Vagina (tissue), 2 donors: ENCODE measurements at regions of chr10 and their contacts with region 1.

Region 1: GRCh38 chr10:101602761-101603398 is 14.8 kb downstream of the DPCD start:
- DNase-seq: no peak
- H3K4me3 ChIP-seq: no peak overlapping the region
- H3K27ac ChIP-seq: no peak overlapping the region
- H3K4me1 ChIP-seq: no peaks in the 10 kb centered on the region
- H3K27me3 ChIP-seq: no peaks in the 10 kb centered on the region
- CTCF ChIP-seq: peak; percentile 1 to 61 (median 56)
- POLR2A ChIP-seq: no peak

Region 2: GRCh38 chr10:101512738-101513137 is 90.1 kb before region 1 on chr10:
- intact Hi-C with region 1: no loop called
- DNase-seq: no peak
- H3K4me3 ChIP-seq: no peak overlapping the region
- H3K27ac ChIP-seq: no peak overlapping the region
- H3K4me1 ChIP-seq: no peaks in the 10 kb centered on the region
- H3K27me3 ChIP-seq: no peaks in the 10 kb centered on the region
- CTCF ChIP-seq: no peak
- POLR2A ChIP-seq: no peak

Region 3: DNA sequence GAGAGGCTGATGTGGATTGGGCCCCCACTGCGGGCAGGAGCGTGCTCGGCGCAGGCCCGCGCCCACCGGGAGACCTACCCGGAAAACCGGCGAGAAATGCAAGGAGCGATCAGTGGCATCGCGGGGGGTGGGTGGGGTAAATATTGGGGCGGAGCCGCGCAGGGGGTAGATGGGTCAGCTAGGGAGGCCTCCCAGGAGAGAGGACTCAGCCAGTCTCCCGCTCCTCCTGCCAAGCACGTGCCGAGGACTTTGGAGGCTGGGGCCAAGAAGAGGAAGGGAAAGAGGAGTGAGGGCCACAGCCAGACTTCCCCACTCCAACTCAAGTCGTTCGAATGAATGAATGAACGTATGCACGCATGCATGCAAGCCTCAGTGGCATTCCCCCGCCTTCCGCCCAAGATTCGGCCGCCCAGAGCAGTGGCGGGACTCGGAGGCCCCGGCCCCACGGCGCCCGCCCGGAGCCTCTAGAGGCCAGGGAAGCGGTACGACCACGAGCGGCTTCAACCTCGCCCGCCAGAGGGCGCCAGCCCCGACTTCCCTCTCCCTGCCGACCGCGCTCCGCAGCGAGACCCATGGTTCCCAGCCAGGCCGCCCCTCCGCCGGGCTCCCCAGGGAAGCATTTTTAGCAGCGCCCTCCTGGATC is 176.8 kb after region 1 on chr10:
- intact Hi-C with region 1: loop called (anchors 10 kb)
- DNase-seq: no peak
- H3K4me3 ChIP-seq: peak overlapping the region; percentile 40 to 49
- H3K27ac ChIP-seq: no peak overlapping the region
- H3K4me1 ChIP-seq: peaks cover 73% of the 10 kb centered on the region
- H3K27me3 ChIP-seq: peaks cover 8% of the 10 kb centered on the region
- CTCF ChIP-seq: peak; percentile 40 to 64 (median 58)
- POLR2A ChIP-seq: no peak